CD4-positive, alpha-beta memory T cell (primary cell): ENCODE measurements at regions of chr1 and their contacts with region 1.

Region 1: GRCh38 chr1:151815716-151816327 is 10.6 kb upstream of the LINGO4 start:
- DNase-seq: peak; percentile 72 to 81 (median 78)
- H3K4me3 ChIP-seq: peak overlapping the region; percentile 25 to 38
- H3K4me3 Mint-ChIP-seq: peak overlapping the region; percentile 75 to 85 (median 79)
- H3K27ac ChIP-seq: peak overlapping the region; percentile 49
- H3K27ac Mint-ChIP-seq: peak overlapping the region; percentile 84 to 95 (median 92)
- H3K4me1 ChIP-seq: peaks cover 92% of the 10 kb centered on the region
- H3K4me1 Mint-ChIP-seq: peaks cover 64 to 96% (median 80%) of the 10 kb centered on the region in 4 donors
- H3K27me3 ChIP-seq: no peaks in the 10 kb centered on the region
- H3K27me3 Mint-ChIP-seq: no peaks in the 10 kb centered on the region

Region 2: GRCh38 chr1:151539990-151540981 is 275.5 kb before region 1 on chr1 and contains the start of gene TUFT1:
- CTCF ChIA-PET with region 1: no interaction called
- POLR2A ChIA-PET with region 1: no interaction called
- intact Hi-C with region 1: no loop called
- DNase-seq: peak; percentile 92 to 96 (median 93)
- H3K4me3 ChIP-seq: peak within 1 kb of the TSS; percentile 50 to 62
- H3K4me3 Mint-ChIP-seq: peak within 1 kb of the TSS; percentile 95 to 98 (median 96)
- H3K27ac ChIP-seq: peak within 1 kb of the TSS; percentile 57
- H3K27ac Mint-ChIP-seq: peak within 1 kb of the TSS; percentile 78 to 97 (median 94)
- H3K4me1 ChIP-seq: peaks cover 18% of the 10 kb centered on the region
- H3K4me1 Mint-ChIP-seq: peaks cover 8 to 26% (median 19%) of the 10 kb centered on the region in 4 donors
- H3K27me3 ChIP-seq: no peaks in the 10 kb centered on the region
- H3K27me3 Mint-ChIP-seq: no peaks in the 10 kb centered on the region
- total RNA-seq, gene TUFT1: 3.5 to 4.4 TPM

Region 3: GRCh38 chr1:151762941-151763921 is 52.6 kb before region 1 on chr1 and contains the start of gene MRPL9:
- CTCF ChIA-PET with region 1: interaction called, 3 read pairs
- POLR2A ChIA-PET with region 1: interaction called, 18 read pairs
- intact Hi-C with region 1: no loop called
- DNase-seq: peak; percentile 82 to 85 (median 83)
- H3K4me3 ChIP-seq: peak within 1 kb of the TSS; percentile 34 to 66
- H3K4me3 Mint-ChIP-seq: peak within 1 kb of the TSS; percentile 86 to 97 (median 92)
- H3K27ac ChIP-seq: peak within 1 kb of the TSS; percentile 72
- H3K27ac Mint-ChIP-seq: peak within 1 kb of the TSS; percentile 90 to 99 (median 96)
- H3K4me1 ChIP-seq: peaks cover 16% of the 10 kb centered on the region
- H3K4me1 Mint-ChIP-seq: peaks cover 12 to 30% (median 21%) of the 10 kb centered on the region in 4 donors
- H3K27me3 ChIP-seq: no peaks in the 10 kb centered on the region
- H3K27me3 Mint-ChIP-seq: no peaks in the 10 kb centered on the region
- total RNA-seq, gene MRPL9: 75.5 to 82.8 TPM

Region 4: DNA sequence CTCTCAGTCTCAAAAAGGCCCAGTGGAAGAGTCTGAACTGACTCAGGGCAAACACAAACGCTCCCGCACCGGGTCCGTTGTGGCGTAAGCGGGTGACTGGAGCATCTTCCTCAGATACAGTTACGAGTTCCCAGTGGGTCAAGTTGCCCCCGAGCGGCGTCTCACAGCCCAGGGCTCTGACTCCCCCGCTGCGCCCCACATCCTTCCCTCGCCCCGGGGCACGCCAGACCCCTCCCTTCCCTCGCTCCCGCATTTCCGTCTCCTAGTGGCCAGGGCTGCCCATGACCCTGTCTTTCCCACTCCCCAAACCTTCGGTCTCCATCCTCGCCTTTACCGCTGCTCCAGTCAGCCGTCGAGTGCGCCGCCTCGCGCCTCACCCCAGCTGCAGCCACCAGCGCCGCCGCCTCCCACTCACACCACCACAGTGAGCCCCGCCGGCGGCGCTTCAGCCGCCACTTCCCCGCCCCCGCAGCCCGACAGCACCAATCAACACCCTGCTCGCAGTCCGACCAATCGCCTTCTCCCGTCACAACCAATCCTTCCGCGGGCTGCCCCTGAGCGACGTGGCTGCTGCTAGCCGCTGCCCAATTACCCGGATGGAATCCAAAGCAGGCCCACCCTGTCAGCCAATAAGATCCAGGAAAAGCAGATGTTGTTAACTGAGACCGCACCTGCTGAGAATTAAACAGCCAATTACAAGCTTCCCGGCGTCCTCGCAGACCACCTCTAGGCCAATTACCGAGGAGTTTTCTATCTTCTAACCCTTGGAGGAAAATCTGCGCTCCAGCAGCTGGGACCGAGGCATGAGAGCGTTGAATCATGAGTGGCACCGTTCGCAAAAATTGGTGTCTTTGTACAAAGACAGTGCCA is 25.5 kb before region 1 on chr1 and contains the start of gene TDRKH:
- CTCF ChIA-PET with region 1: interaction called, 7 read pairs
- POLR2A ChIA-PET with region 1: interaction called, 19 read pairs
- intact Hi-C with region 1: no loop called
- DNase-seq: peak; percentile 98 to 100 (median 99)
- H3K4me3 ChIP-seq: peak within 1 kb of the TSS; percentile 86 to 100
- H3K4me3 Mint-ChIP-seq: peak within 1 kb of the TSS; percentile 91 to 99 (median 96)
- H3K27ac ChIP-seq: peak within 1 kb of the TSS; percentile 51
- H3K27ac Mint-ChIP-seq: peak within 1 kb of the TSS; percentile 85 to 98 (median 90)
- H3K4me1 ChIP-seq: peaks cover 29% of the 10 kb centered on the region
- H3K4me1 Mint-ChIP-seq: peaks cover 21 to 41% (median 34%) of the 10 kb centered on the region in 4 donors
- H3K27me3 ChIP-seq: no peaks in the 10 kb centered on the region
- H3K27me3 Mint-ChIP-seq: no peaks in the 10 kb centered on the region
- total RNA-seq, gene TDRKH: 29.1 to 29.3 TPM

Region 5: DNA sequence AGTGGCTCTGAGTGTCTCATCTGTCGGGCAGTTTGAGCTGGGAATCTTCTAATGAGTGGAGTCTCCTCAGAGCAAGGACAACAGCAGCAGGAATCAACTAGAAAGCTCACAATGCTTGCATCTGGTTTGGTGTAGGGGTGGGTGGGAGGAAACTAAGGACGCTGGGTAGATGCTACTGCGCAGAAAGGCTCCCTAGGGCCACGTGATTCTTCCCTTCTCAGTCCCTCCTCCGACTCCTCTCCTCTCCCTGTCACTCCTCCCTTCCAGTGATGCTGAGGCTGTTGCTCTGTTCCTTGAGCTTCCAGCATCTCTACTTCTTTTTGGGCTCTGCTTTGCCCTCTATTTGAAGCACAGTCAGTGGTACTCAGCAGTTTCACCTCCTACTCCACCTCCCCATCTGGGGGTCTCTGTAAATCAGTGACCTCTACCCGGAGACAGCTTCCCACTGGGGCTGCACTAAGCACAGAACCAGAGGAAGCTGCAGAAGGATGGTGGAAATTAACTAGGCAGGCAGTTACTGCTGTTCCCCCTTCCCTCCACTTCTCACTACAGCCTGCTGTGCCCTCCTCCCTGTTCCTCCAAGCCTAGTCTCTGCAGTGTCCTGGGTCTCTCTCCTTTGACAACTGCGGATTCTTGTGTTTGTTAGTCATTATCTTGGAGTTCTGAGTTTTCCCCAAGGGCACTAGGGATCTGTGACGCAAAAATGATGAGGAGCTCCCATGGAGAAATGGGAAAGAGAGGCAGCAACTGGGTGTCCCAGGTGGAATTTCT is 16.5 kb before region 1 on chr1:
- CTCF ChIA-PET with region 1: interaction called, 3 read pairs
- POLR2A ChIA-PET with region 1: interaction called, 35 read pairs
- intact Hi-C with region 1: no loop called
- DNase-seq: no peak
- H3K4me3 ChIP-seq: no peak overlapping the region
- H3K4me3 Mint-ChIP-seq: no peak overlapping the region
- H3K27ac ChIP-seq: no peak overlapping the region
- H3K27ac Mint-ChIP-seq: peak overlapping the region in 3 of 7 donors; percentile 32 to 59 (median 42)
- H3K4me1 ChIP-seq: peaks cover 20% of the 10 kb centered on the region
- H3K4me1 Mint-ChIP-seq: peaks cover 10 to 16% (median 15%) of the 10 kb centered on the region in 4 donors
- H3K27me3 ChIP-seq: no peaks in the 10 kb centered on the region
- H3K27me3 Mint-ChIP-seq: no peaks in the 10 kb centered on the region

Region 6: DNA sequence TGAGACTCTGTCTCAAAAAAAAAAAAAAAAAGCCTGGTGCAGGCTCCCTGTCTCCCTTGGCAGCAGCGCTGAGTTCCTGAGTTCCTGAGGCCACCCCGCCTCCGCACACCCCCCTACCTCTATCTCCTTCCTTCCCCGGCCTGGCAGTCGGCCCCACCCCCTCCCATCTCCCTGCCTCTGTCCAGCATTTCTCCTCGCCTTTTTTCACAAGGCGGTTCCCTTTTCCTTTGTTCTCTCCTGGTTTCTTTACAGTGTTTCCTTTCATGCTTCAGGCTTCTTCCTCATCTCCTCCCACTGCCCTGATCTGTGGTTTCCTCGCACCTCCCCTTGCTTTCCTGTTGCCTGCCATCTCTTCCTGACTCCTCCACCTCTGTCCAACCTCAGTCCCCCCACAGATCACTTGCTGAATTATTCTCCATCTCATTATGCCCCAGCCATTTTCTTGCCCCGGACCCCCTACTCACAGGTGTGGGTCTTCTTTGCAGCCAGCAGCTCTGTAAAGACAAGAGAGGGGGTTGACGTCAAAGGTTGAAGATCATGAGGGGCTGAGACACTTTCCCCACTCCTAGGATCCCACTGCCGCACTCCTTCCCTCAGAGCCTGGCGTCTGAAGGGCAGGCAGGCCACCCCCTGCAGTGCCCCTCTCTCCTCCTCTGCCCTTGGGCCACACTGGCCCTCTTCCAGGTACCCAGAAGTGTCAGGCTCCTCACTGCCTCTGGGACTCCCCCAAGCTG is 13.3 kb after region 1 on chr1:
- CTCF ChIA-PET with region 1: interaction called, 37 read pairs
- POLR2A ChIA-PET with region 1: interaction called, 233 read pairs
- intact Hi-C with region 1: no loop called
- DNase-seq: no peak
- H3K4me3 ChIP-seq: no peak overlapping the region
- H3K4me3 Mint-ChIP-seq: peak overlapping the region; percentile 60 to 94 (median 76)
- H3K27ac ChIP-seq: peak overlapping the region; percentile 62
- H3K27ac Mint-ChIP-seq: peak overlapping the region; percentile 88 to 96 (median 93)
- H3K4me1 ChIP-seq: peaks cover 90% of the 10 kb centered on the region
- H3K4me1 Mint-ChIP-seq: peaks cover 55 to 98% (median 75%) of the 10 kb centered on the region in 4 donors
- H3K27me3 ChIP-seq: no peaks in the 10 kb centered on the region
- H3K27me3 Mint-ChIP-seq: no peaks in the 10 kb centered on the region